A673 (cell line): ENCODE measurements at regions of chr17 and their contacts with region 1.

Region 1: DNA sequence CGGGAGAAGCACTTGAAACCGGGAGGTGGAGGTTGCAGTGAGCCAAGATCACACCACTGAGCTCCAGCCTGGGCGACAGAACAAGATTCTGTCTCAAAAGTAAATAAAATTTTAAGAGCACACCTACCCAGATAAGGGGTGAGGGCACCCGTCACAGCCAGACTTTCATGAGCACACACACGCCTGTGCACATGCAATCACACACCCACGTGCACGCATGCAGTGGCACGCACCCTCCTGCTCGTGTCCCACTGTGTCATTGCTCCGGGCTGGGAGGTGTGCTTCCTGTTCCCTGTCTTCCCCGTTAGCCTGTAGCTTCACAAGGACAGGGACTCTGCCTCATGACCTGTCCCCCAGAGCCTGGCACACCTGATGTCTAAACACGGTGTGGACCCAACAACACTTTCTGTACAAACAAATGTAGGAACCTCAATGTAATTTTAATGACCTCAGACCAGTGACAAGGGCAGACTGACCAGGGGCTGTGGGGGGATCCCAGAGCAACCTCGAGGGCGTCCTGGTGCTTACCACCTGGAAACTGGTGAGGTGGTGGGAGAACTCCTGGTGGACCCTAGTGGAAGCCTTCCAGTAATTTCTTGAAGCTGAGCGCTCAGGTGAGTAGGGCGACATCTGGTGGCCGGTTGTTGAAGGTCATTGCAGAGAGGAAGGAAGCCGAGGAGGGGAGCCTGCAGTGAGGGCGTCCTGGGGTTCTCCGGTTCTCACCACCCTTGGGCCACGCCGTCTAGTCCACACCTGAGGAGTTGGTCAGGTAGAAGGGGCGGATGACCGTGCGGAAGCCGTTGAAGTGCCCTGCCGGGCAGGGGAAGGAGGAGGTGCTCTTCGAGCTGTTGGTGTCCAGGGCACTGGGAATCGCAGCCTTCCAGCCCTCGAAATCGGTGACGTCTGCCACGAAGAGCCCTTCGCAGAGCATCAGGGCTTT is 8.6 kb downstream of the LGALS3BP start:
- DNase-seq: peak; percentile 80
- H3K4me3 ChIP-seq: no peak overlapping the region
- H3K27ac ChIP-seq: no peak overlapping the region
- H3K4me1 ChIP-seq: peaks cover 12% of the 10 kb centered on the region
- H3K27me3 ChIP-seq: no peaks in the 10 kb centered on the region
- CTCF ChIP-seq: peak; percentile 93

Region 2: GRCh38 chr17:78840725-78841611 is 130.1 kb before region 1 on chr17 and contains the start of gene USP36:
- CTCF ChIA-PET with region 1: interaction called, 11 read pairs
- POLR2A ChIA-PET with region 1: no interaction called
- intact Hi-C with region 1: no loop called
- DNase-seq: peak; percentile 99
- H3K4me3 ChIP-seq: peak within 1 kb of the TSS; percentile 81
- H3K27ac ChIP-seq: peak within 1 kb of the TSS; percentile 96
- H3K4me1 ChIP-seq: no peaks in the 10 kb centered on the region
- H3K27me3 ChIP-seq: no peaks in the 10 kb centered on the region
- CTCF ChIP-seq: no peak; the same call in 1 of the 2 replicates
- total RNA-seq, gene USP36: 58.4 and 74.9 TPM in 2 replicates

Region 3: DNA sequence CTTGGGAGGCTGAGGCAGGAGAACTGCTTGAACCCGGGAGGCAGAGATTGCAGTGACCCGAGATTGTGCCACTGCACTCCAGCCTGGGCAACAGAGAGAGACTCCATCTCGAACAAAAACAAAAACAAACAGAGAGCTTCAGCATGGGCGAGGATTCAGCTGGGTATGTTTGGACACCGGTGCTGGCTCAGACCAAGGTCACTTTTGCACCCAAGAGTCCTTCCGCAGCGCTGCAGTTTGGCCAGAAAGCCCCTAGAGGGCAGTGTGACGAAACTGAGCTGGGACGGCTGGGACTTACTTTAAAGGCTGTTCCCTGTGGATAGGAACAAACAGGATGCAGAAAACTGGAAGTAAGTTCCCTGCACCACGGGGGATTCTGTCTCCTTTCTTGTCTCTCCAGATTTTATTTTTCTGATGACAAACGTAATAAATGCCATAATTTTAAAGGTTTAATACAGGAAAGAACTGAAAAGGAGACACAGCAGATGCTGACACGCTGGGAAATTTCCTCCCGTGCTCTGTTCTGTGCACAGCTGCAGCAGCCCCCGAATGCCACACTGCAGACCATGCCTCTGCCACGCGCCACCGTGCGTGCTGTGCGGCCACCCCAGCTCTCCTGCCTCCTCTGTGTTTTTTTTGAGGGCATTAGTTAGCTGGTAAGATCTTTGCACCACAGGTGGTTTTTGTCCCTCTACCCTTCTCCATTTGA is 105.3 kb before region 1 on chr17:
- CTCF ChIA-PET with region 1: interaction called, 16 read pairs
- POLR2A ChIA-PET with region 1: no interaction called
- intact Hi-C with region 1: loop called (anchors 1 kb)
- DNase-seq: peak; percentile 81
- H3K4me3 ChIP-seq: peak overlapping the region; percentile 6
- H3K27ac ChIP-seq: no peak overlapping the region
- H3K4me1 ChIP-seq: no peaks in the 10 kb centered on the region
- H3K27me3 ChIP-seq: no peaks in the 10 kb centered on the region
- CTCF ChIP-seq: peak; percentile 90

Region 4: DNA sequence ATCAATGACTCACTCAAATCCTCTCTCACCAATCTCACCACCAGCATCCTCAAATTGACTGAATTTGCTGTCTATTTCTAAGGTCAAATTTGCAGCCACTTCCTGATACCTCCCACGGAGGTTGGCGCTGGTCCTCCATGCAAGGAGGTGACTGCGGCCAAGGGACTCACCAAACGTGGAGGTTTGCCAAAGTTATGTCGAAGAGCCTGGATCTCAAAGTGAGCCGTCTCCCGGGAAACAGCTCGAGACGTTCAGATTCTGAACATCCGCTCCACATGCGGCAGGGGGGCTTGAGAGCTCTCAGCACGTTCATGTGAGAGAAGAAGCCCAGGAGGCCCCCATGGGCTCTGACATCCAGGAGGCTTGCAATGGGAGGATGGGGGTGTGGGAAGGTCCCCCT is 14.0 kb before region 1 on chr17:
- CTCF ChIA-PET with region 1: no interaction called
- POLR2A ChIA-PET with region 1: no interaction called
- intact Hi-C with region 1: no loop called
- DNase-seq: no peak
- H3K4me3 ChIP-seq: no peak overlapping the region
- H3K27ac ChIP-seq: no peak overlapping the region
- H3K4me1 ChIP-seq: no peaks in the 10 kb centered on the region
- H3K27me3 ChIP-seq: no peaks in the 10 kb centered on the region
- CTCF ChIP-seq: no peak